Spleen (tissue), 13 donors: ENCODE measurements at regions of chr7 and their contacts with region 1.

Region 1: GRCh38 chr7:32942786-32943653 is 14.2 kb upstream of the FKBP9 start:
- DNase-seq: peak; percentile 96
- H3K4me3 ChIP-seq: peak overlapping the region; percentile 37 to 88 (median 70)
- H3K27ac ChIP-seq: peak overlapping the region; percentile 55 to 95 (median 92)
- H3K4me1 ChIP-seq: peaks cover 7 to 47% (median 39%) of the 10 kb centered on the region in 6 donors
- H3K27me3 ChIP-seq: peaks cover 0 to 5% (median 0%) of the 10 kb centered on the region in 7 donors
- CTCF ChIP-seq: peak in 9 of 11 experiments; percentile 43 to 84 (median 81)
- POLR2A ChIP-seq: peak in 1 of 3 donors; percentile 39

Region 2: GRCh38 chr7:32846701-32847100 is 96.3 kb before region 1 on chr7:
- intact Hi-C with region 1: loop called (anchors 5 kb)
- DNase-seq: peak; percentile 96
- H3K4me3 ChIP-seq: no peak overlapping the region
- H3K27ac ChIP-seq: no peak overlapping the region
- H3K4me1 ChIP-seq: peaks cover 0 to 13% (median 8%) of the 10 kb centered on the region in 6 donors
- H3K27me3 ChIP-seq: no peaks in the 10 kb centered on the region
- CTCF ChIP-seq: peak; percentile 76 to 95 (median 86)
- POLR2A ChIP-seq: no peak